CD8-positive, alpha-beta memory T cell (primary cell): ENCODE measurements at regions of chr2 and their contacts with region 1.

Region 1: GRCh38 chr2:73176881-73177644 is 25.3 kb upstream of the NOTO start:
- DNase-seq: peak; percentile 83 to 89 (median 87)
- H3K4me3 ChIP-seq: peak overlapping the region; percentile 81
- H3K4me3 Mint-ChIP-seq: peak overlapping the region; percentile 87 to 95 (median 89)
- H3K27ac ChIP-seq: no peak overlapping the region
- H3K27ac Mint-ChIP-seq: peak overlapping the region; percentile 23 to 81 (median 55)
- H3K4me1 ChIP-seq: peaks cover 22% of the 10 kb centered on the region
- H3K4me1 Mint-ChIP-seq: peaks cover 14 to 22% (median 15%) of the 10 kb centered on the region in 3 donors
- H3K27me3 ChIP-seq: peaks cover 10% of the 10 kb centered on the region
- H3K27me3 Mint-ChIP-seq: peaks cover 15 to 54% of the 10 kb centered on the region in 2 donors

Region 2: DNA sequence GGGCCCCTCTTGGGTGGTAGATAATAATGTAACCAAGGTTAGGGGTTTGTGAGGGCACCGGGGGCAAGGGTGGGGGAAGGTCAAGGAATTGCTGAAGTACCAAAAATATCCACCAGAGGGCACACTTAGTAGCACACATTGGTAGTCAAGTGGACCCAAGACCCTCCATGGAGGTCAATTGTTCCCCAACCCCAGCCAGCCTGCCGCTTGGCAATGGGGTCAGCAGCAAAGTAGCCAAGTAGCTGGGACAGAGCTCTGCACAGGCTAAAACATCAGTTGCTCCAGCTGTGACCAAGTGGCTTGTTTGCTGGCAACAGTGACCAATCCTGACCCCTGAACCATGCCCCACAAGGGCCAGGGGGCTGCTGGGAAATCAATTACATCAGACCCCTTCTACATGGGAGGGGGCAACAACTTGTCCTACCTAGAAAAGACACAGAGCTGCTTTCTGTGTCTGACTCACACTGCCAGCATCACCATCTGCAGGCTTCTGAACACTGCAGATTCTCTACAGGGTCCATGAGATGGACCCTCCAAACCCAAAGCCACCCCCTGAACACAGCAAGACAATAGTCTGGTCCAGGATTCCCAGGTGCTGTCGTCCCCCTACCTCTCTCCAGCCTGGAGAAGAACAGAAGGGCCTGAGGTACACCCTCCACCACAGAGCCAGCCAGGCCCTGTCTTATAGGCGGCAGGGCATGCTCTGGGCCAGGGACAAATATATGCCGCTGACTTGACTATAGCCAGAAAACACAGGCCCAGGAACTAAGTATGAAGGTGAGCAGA is 183.7 kb before region 1 on chr2:
- CTCF ChIA-PET with region 1: interaction called, 85 read pairs
- POLR2A ChIA-PET with region 1: no interaction called
- DNase-seq: peak; percentile 10 to 56 (median 33)
- H3K4me3 ChIP-seq: no peak overlapping the region
- H3K4me3 Mint-ChIP-seq: no peak overlapping the region
- H3K27ac ChIP-seq: no peak overlapping the region
- H3K27ac Mint-ChIP-seq: no peak overlapping the region
- H3K4me1 ChIP-seq: no peaks in the 10 kb centered on the region
- H3K4me1 Mint-ChIP-seq: no peaks in the 10 kb centered on the region
- H3K27me3 ChIP-seq: no peaks in the 10 kb centered on the region
- H3K27me3 Mint-ChIP-seq: no peaks in the 10 kb centered on the region

Region 3: GRCh38 chr2:73085691-73086360 is 91.2 kb before region 1 on chr2:
- CTCF ChIA-PET with region 1: interaction called, 76 read pairs
- POLR2A ChIA-PET with region 1: no interaction called
- DNase-seq: peak; percentile 62 to 86 (median 72)
- H3K4me3 ChIP-seq: no peak overlapping the region
- H3K4me3 Mint-ChIP-seq: no peak overlapping the region
- H3K27ac ChIP-seq: no peak overlapping the region
- H3K27ac Mint-ChIP-seq: no peak overlapping the region
- H3K4me1 ChIP-seq: no peaks in the 10 kb centered on the region
- H3K4me1 Mint-ChIP-seq: peaks cover 0 to 2% (median 0%) of the 10 kb centered on the region in 3 donors
- H3K27me3 ChIP-seq: no peaks in the 10 kb centered on the region
- H3K27me3 Mint-ChIP-seq: no peaks in the 10 kb centered on the region

Region 4: GRCh38 chr2:73163483-73164367 is 13.3 kb before region 1 on chr2:
- CTCF ChIA-PET with region 1: interaction called, 16 read pairs
- POLR2A ChIA-PET with region 1: no interaction called
- DNase-seq: peak; percentile 35 to 66 (median 48)
- H3K4me3 ChIP-seq: no peak overlapping the region
- H3K4me3 Mint-ChIP-seq: no peak overlapping the region
- H3K27ac ChIP-seq: no peak overlapping the region
- H3K27ac Mint-ChIP-seq: peak overlapping the region in 1 of 8 donors; percentile 31
- H3K4me1 ChIP-seq: no peaks in the 10 kb centered on the region
- H3K4me1 Mint-ChIP-seq: peaks cover 0 to 2% (median 0%) of the 10 kb centered on the region in 3 donors
- H3K27me3 ChIP-seq: no peaks in the 10 kb centered on the region
- H3K27me3 Mint-ChIP-seq: peaks cover 12 to 35% of the 10 kb centered on the region in 2 donors

Region 5: GRCh38 chr2:73202156-73203054 is 25.3 kb after region 1 on chr2 and contains the start of gene NOTO:
- CTCF ChIA-PET with region 1: interaction called, 11 read pairs
- POLR2A ChIA-PET with region 1: no interaction called
- DNase-seq: no peak
- H3K4me3 ChIP-seq: no peak within 1 kb of the TSS
- H3K4me3 Mint-ChIP-seq: peak within 1 kb of the TSS; percentile 14 to 82 (median 66)
- H3K27ac ChIP-seq: no peak within 1 kb of the TSS
- H3K27ac Mint-ChIP-seq: no peak within 1 kb of the TSS
- H3K4me1 ChIP-seq: no peaks in the 10 kb centered on the region
- H3K4me1 Mint-ChIP-seq: peaks cover 5 to 12% (median 6%) of the 10 kb centered on the region in 3 donors
- H3K27me3 ChIP-seq: peaks cover 13% of the 10 kb centered on the region
- H3K27me3 Mint-ChIP-seq: peaks cover 47 to 61% of the 10 kb centered on the region in 2 donors
- total RNA-seq, gene NOTO: not detected

Region 6: DNA sequence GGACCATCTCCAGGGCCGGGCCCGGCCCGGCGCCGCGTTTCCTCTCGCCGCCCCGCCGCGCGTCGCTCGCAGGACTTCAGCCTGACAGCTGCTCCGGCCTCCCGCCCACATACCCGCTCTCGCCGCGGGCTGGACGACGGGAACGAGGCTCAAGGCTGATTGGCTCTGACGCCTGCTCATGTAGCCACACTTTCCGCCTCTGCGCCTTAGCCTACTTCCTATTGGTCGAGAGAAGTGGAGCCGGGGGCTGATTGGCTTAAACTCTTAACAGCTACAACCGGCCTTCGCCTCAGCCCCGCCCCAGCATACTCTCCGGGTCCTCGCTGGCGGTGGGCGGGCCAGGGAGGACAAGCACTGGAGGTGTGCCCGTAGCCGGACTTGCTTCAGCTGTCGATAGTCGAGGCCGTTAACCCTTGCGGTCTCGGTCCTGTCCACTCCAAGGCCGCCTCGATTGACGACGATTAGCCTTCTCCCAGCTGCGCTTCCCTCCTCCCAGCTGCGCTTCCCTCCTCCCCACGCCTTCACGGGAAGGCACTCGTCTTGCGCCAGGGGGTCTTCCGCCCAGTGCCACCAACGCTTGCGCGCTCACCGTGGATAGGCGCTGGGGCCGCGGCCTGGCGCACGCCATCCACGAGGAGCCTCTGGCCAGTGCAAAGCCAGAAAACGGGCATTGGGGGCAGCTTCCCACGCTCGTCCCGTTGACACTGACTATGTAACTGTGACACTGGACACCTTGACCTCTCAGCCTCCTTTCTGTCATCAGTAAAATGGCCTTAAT is 56.3 kb after region 1 on chr2 and contains the start of gene PRADC1:
- CTCF ChIA-PET with region 1: interaction called, 22 read pairs
- POLR2A ChIA-PET with region 1: interaction called, 4 read pairs
- DNase-seq: peak; percentile 90 to 97 (median 93)
- H3K4me3 ChIP-seq: peak within 1 kb of the TSS; percentile 88
- H3K4me3 Mint-ChIP-seq: peak within 1 kb of the TSS; percentile 95 to 99 (median 98)
- H3K27ac ChIP-seq: peak within 1 kb of the TSS; percentile 93
- H3K27ac Mint-ChIP-seq: peak within 1 kb of the TSS; percentile 81 to 98 (median 94)
- H3K4me1 ChIP-seq: peaks cover 26% of the 10 kb centered on the region
- H3K4me1 Mint-ChIP-seq: peaks cover 33 to 42% (median 41%) of the 10 kb centered on the region in 3 donors
- H3K27me3 ChIP-seq: no peaks in the 10 kb centered on the region
- H3K27me3 Mint-ChIP-seq: no peaks in the 10 kb centered on the region
- total RNA-seq, gene PRADC1: 21.1 to 24.9 TPM